ENCODE measurements at regions of chr11 and their contacts with region 1.

Region 1: DNA sequence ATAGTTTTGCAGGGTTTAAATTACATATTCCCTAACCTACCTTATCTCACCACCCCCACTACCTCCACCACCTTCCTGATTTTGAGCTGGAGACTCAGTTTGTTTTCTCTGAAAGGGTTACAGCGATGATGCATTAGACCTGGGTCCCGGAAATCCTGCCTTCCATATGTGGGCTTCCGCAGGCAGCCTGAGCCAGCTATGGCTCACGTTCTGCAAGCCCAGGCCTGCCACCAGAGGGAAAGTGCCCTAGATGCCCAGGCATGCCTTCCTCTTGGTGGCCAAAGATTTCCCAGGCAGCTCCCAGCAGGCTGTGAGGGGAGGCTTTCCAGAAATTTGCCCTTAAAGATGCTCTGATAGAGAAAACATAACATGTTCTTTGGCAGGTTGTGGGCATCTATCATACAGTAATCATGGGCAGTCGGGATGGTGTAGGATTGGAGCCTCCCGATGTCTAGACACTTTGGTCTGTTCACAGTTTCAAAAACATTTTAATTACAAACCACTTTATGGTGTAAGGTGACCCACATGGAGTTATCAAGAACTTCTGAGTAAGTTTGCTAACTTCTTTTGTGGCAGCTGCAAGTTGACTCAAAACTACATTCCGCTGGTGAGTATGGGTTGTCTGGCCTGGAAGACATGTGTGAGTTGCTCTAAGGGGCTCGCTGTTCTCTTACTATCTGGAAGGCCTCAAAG is 79.3 kb downstream of the MICAL2 start:
- DNase-seq: no peak
- ATAC-seq: no peak
- H3K4me3 ChIP-seq: no peak overlapping the region
- H3K27ac ChIP-seq: peak overlapping the region; percentile 34
- H3K4me1 ChIP-seq: peaks cover 25% of the 10 kb centered on the region
- H3K27me3 ChIP-seq: no peaks in the 10 kb centered on the region
- CTCF ChIP-seq: no peak

Region 2: GRCh38 chr11:11841723-11842420 is 347.8 kb before region 1 on chr11 and contains the start of gene USP47:
- CTCF ChIA-PET with region 1: no interaction called
- POLR2A ChIA-PET with region 1: interaction called, 17 read pairs
- in situ Hi-C with region 1: no loop called
- intact Hi-C with region 1: no loop called
- DNase-seq: no peak
- ATAC-seq: peak; percentile 86
- H3K4me3 ChIP-seq: peak within 1 kb of the TSS; percentile 82 to 84
- H3K27ac ChIP-seq: peak within 1 kb of the TSS; percentile 94
- H3K4me1 ChIP-seq: peaks cover 32% of the 10 kb centered on the region
- H3K27me3 ChIP-seq: no peaks in the 10 kb centered on the region
- CTCF ChIP-seq: peak; percentile 65; the same call in 1 of the 2 replicates
- total RNA-seq, gene USP47: 39.2 TPM

Region 3: GRCh38 chr11:12008790-12009616 is 180.7 kb before region 1 on chr11:
- CTCF ChIA-PET with region 1: no interaction called
- POLR2A ChIA-PET with region 1: no interaction called
- in situ Hi-C with region 1: no loop called
- intact Hi-C with region 1: no loop called
- DNase-seq: no peak
- ATAC-seq: peak; percentile 93
- H3K4me3 ChIP-seq: peak overlapping the region; percentile 61 to 76
- H3K27ac ChIP-seq: peak overlapping the region; percentile 55
- H3K4me1 ChIP-seq: peaks cover 9% of the 10 kb centered on the region
- H3K27me3 ChIP-seq: no peaks in the 10 kb centered on the region
- CTCF ChIP-seq: no peak

Region 4: GRCh38 chr11:12288931-12289666 is 99.4 kb after region 1 on chr11:
- CTCF ChIA-PET with region 1: no interaction called
- POLR2A ChIA-PET with region 1: no interaction called
- in situ Hi-C with region 1: no loop called
- intact Hi-C with region 1: no loop called
- DNase-seq: no peak
- ATAC-seq: no peak
- H3K4me3 ChIP-seq: no peak overlapping the region
- H3K27ac ChIP-seq: no peak overlapping the region
- H3K4me1 ChIP-seq: peaks cover 43% of the 10 kb centered on the region
- H3K27me3 ChIP-seq: no peaks in the 10 kb centered on the region
- CTCF ChIP-seq: peak; percentile 74

Region 5: GRCh38 chr11:13229711-13230318 is 1040.1 kb after region 1 on chr11:
- CTCF ChIA-PET with region 1: no interaction called
- POLR2A ChIA-PET with region 1: no interaction called
- in situ Hi-C with region 1: no loop called
- intact Hi-C with region 1: no loop called
- DNase-seq: no peak
- ATAC-seq: no peak
- H3K4me3 ChIP-seq: no peak overlapping the region
- H3K27ac ChIP-seq: no peak overlapping the region
- H3K4me1 ChIP-seq: no peaks in the 10 kb centered on the region
- H3K27me3 ChIP-seq: peaks cover 3% of the 10 kb centered on the region; the same call in 1 of the 2 replicates
- CTCF ChIP-seq: no peak

Measured in Panc1 (cell line).